ENCODE measurements at regions of chr5 and their contacts with region 1.

Region 1: GRCh38 chr5:140855772-140856674 is at the start of gene PCDHA10:
- DNase-seq: no peak
- ATAC-seq: no peak
- H3K4me3 ChIP-seq: no peak within 1 kb of the TSS
- H3K27ac ChIP-seq: no peak within 1 kb of the TSS
- H3K4me1 ChIP-seq: no peaks in the 10 kb centered on the region
- H3K27me3 ChIP-seq: no peaks in the 10 kb centered on the region
- CTCF ChIP-seq: peak; percentile 22; the same call in 1 of the 2 replicates
- total RNA-seq, gene PCDHA10: 0.33 TPM

Region 2: DNA sequence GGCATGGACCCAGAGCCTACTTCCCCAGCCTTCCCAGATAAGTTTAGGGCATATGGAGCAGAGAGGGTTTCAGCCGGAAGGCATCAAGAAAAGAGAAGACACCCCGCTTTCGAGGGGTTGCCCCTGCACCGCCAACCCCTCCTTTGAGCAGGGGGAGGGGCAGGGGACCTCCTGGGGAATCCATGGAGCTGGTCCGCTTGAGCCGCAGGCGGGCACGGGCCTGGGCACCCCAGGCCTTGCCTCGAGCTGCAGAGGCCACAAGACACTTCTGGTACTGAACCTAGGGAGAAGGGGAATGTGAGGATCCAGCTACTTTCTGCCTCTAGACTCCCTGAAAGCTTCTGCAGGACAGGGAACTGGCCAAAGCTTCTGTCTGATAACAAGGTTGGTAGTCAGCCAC is 297.5 kb before region 1 on chr5:
- CTCF ChIA-PET with region 1: interaction called, 10 read pairs
- POLR2A ChIA-PET with region 1: no interaction called
- in situ Hi-C with region 1: no loop called
- intact Hi-C with region 1: no loop called
- DNase-seq: no peak
- ATAC-seq: no peak
- H3K4me3 ChIP-seq: no peak overlapping the region
- H3K27ac ChIP-seq: no peak overlapping the region
- H3K4me1 ChIP-seq: peaks cover 27% of the 10 kb centered on the region
- H3K27me3 ChIP-seq: no peaks in the 10 kb centered on the region
- CTCF ChIP-seq: no peak

Measured in Panc1 (cell line).